ENCODE measurements at regions of chr5 and their contacts with region 1.

Region 1: GRCh38 chr5:115098041-115098702 is 71.5 kb downstream of the TRIM36 start:
- DNase-seq: peak in 1 of 4 donors; percentile 51
- ATAC-seq: peak; percentile 94
- H3K4me3 ChIP-seq: no peak overlapping the region
- H3K27ac ChIP-seq: no peak overlapping the region
- H3K4me1 ChIP-seq: no peaks in the 10 kb centered on the region
- H3K27me3 ChIP-seq: no peaks in the 10 kb centered on the region
- CTCF ChIP-seq: peak; percentile 65 to 71

Region 2: DNA sequence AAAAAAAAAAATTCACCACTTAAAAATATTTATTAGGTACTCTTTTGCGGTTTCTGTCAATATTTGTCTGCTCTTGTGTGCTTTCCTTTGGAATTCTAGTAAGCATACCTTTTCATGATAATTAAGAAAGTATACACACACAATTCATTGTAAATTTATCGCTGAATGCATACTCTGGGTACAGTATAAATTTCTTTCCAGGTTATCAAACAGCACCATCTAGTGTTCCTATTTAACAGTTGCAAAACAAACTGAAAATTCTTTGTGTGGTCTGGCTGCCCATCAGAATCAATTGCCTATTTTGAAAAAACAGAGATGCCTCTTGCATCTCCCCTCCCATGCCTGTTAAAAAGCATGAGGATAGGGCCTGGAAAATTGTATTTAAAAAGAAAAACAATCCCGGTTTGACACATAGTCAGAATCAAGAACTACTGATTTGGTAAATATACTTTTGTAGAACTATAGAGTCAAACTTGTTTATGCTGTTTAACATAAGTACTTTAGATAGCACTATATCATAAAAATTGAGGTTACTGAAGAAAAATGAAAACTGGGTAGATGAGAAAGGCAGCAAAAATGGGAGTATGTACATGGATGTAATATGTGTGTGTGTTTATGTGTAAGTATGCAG is 148.3 kb after region 1 on chr5:
- intact Hi-C with region 1: loop called in 1 of 2 experiments (anchors 10 kb)
- DNase-seq: peak in 1 of 4 donors; percentile 35
- ATAC-seq: peak; percentile 82
- H3K4me3 ChIP-seq: no peak overlapping the region
- H3K27ac ChIP-seq: no peak overlapping the region
- H3K4me1 ChIP-seq: peaks cover 6 to 15% of the 10 kb centered on the region in 2 donors
- H3K27me3 ChIP-seq: no peaks in the 10 kb centered on the region
- CTCF ChIP-seq: peak; percentile 61 to 65

Region 3: DNA sequence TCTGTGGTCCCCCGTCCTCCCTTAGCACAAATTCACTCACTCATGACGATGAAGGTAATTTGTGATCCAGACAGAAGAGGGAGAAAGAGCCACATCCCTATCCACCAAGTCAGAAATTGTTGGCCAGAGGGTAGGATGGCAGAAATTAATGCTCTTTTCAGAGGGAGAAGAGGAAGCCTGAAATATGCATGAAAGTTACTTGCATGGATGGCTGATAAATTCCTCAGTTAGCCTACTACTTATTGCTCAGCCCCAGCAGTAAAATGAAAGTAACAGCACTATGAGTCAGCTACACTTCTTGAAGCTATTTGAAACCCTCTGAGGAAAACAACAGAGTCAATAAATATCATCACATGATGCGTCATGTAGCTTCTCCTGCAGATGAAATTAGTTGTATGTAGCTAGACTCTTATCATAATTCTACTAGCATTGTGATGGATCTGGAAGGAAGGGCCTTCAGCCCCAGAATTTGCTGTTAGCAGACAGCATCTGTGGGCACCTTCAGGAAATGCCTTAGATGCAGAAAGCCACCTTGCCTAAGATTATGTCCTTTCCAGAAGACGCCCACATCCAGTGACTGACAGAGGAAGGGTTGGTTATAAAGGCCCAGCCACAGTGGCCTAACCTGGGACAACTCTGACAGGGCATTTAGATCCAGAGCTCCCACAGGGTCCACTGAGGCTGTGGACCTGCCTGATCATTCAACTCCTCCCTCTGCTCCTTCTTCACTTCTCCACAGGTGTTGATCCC is 279.5 kb after region 1 on chr5:
- intact Hi-C with region 1: no loop called
- DNase-seq: no peak
- ATAC-seq: peak; percentile 64
- H3K4me3 ChIP-seq: no peak overlapping the region
- H3K27ac ChIP-seq: no peak overlapping the region
- H3K4me1 ChIP-seq: peaks cover 0 to 11% of the 10 kb centered on the region in 2 donors
- H3K27me3 ChIP-seq: no peaks in the 10 kb centered on the region
- CTCF ChIP-seq: no peak